GM12878 (cell line): ENCODE measurements at regions of chrX and their contacts with region 1.

Region 1: GRCh38 chrX:106481341-106481740 is 130.4 kb upstream of the RADX start:
- DNase-seq: peak; percentile 15
- ATAC-seq: peak; percentile 37
- H3K4me3 ChIP-seq: no peak overlapping the region
- H3K27ac ChIP-seq: no peak overlapping the region
- H3K4me1 ChIP-seq: no peaks in the 10 kb centered on the region
- H3K27me3 ChIP-seq: no peaks in the 10 kb centered on the region
- CTCF ChIP-seq: peak; percentile 65 to 79 (median 68)
- EP300 ChIP-seq: no peak
- POLR2A ChIP-seq: no peak
- RAD21 ChIP-seq: peak; percentile 84

Region 2: GRCh38 chrX:106611679-106612392 is 130.5 kb after region 1 on chrX and contains the start of gene RADX:
- CTCF ChIA-PET with region 1: interaction called, 14 read pairs
- POLR2A ChIA-PET with region 1: interaction called, 4 read pairs
- RAD21 ChIA-PET with region 1: interaction called, 4 read pairs
- SMC1A ChIA-PET with region 1: interaction called, 7 read pairs
- in situ Hi-C with region 1: no loop called
- intact Hi-C with region 1: no loop called
- DNase-seq: peak; percentile 49
- ATAC-seq: peak; percentile 98
- H3K4me3 ChIP-seq: peak within 1 kb of the TSS; percentile 73
- H3K27ac ChIP-seq: peak within 1 kb of the TSS; percentile 46
- H3K4me1 ChIP-seq: no peaks in the 10 kb centered on the region
- H3K27me3 ChIP-seq: no peaks in the 10 kb centered on the region
- CTCF ChIP-seq: no peak
- EP300 ChIP-seq: no peak
- POLR2A ChIP-seq: peak; percentile 62
- RAD21 ChIP-seq: no peak
- polyA plus RNA-seq, gene RADX: 4.3 to 5.4 TPM

Region 3: DNA sequence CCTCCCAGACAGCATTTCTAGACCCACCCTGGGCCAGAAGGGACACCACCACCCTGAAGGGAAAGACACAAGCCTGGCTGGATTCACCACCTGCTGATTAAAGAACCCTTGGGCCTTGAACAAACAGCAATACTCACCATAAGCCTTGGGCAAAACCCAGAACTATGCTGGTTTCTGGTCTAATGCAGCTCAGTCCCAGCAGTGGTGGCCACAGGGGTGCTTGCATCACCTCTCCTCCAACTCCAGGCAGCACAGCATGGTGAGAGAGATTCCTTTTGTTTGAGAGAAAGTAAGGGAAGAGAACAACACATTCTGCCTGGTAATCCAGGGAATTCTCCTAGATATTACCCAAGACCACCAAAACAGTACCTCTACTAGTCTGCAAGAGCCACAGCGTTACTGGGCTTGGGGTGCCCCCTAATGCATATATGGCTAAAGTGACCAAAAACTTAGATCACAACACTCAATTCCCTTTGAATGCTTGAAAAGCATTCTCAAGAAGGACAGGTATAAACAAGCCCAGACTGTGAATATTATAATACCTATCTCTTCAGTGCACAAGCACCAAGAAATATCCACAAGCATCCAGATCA is 270.8 kb after region 1 on chrX:
- CTCF ChIA-PET with region 1: interaction called, 4 read pairs
- POLR2A ChIA-PET with region 1: no interaction called
- RAD21 ChIA-PET with region 1: no interaction called
- SMC1A ChIA-PET with region 1: interaction called, 3 read pairs
- in situ Hi-C with region 1: no loop called
- intact Hi-C with region 1: loop called (anchors 5 kb)
- DNase-seq: no peak
- ATAC-seq: no peak
- H3K4me3 ChIP-seq: no peak overlapping the region
- H3K27ac ChIP-seq: no peak overlapping the region
- H3K4me1 ChIP-seq: no peaks in the 10 kb centered on the region
- H3K27me3 ChIP-seq: no peaks in the 10 kb centered on the region
- CTCF ChIP-seq: 0 out of 6 replicates have a peak, but pooled peaks of 1 of the 3 experiments have one; percentile 3
- EP300 ChIP-seq: no peak
- POLR2A ChIP-seq: no peak
- RAD21 ChIP-seq: peak; percentile 40; the same call in 1 of the 2 replicates

Region 4: DNA sequence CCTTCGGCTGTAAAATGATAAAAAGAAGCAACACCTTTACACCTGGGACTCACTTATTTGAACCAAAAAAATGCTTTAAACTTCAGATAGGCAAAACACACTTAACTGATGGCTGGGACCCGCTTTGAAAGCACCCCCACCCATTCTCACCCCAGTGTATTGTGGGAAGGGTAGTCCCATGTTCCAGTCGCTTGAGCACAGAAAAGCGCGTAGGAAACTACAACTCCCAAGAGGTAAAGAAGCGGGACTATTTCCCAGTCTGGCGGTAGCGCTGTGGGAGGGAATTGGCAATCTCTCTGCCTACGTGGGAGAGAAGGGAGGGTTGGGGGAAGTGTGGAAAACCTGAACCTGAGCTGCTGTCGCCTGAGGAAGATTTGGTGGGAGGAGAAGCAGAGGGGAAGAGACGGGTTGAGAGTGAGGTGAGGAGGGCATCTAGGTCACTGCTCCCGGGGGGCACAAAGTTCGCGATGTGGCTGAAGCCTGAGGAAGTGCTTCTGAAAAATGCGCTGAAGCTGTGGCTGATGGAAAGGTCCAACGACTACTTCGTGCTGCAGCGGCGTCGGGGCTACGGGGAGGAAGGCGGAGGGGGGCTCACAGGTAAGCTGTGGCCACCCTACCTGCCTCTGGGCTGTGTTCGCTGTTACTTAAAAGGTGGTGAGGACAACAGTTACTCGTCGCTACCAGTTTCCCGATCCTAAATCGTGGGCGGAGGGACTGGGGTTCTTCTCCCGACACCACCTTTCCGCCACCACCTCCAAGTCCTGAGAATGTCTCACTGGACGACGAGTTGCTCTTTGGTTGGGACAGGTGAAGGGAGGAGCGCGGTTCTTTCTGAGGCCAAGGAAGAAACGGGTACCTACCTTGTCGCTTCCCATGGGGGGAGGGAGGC is 321.3 kb after region 1 on chrX and contains the start of gene TBC1D8B:
- CTCF ChIA-PET with region 1: interaction called, 3 read pairs
- POLR2A ChIA-PET with region 1: no interaction called
- RAD21 ChIA-PET with region 1: no interaction called
- SMC1A ChIA-PET with region 1: interaction called, 3 read pairs
- in situ Hi-C with region 1: loop called (anchors 10 kb)
- intact Hi-C with region 1: no loop called
- DNase-seq: peak; percentile 50
- ATAC-seq: peak; percentile 97
- H3K4me3 ChIP-seq: peak within 1 kb of the TSS; percentile 46
- H3K27ac ChIP-seq: no peak within 1 kb of the TSS
- H3K4me1 ChIP-seq: no peaks in the 10 kb centered on the region
- H3K27me3 ChIP-seq: no peaks in the 10 kb centered on the region
- CTCF ChIP-seq: no peak
- EP300 ChIP-seq: no peak
- POLR2A ChIP-seq: no peak
- RAD21 ChIP-seq: no peak
- polyA plus RNA-seq, gene TBC1D8B: 0.95 to 1.2 TPM

Region 5: GRCh38 chrX:107894038-107894437 is 1412.7 kb after region 1 on chrX:
- CTCF ChIA-PET with region 1: no interaction called
- POLR2A ChIA-PET with region 1: no interaction called
- RAD21 ChIA-PET with region 1: no interaction called
- SMC1A ChIA-PET with region 1: no interaction called
- in situ Hi-C with region 1: loop called (anchors 25 kb)
- intact Hi-C with region 1: loop called (anchors 5 kb)
- DNase-seq: peak; percentile 20
- ATAC-seq: peak; percentile 87
- H3K4me3 ChIP-seq: no peak overlapping the region
- H3K27ac ChIP-seq: no peak overlapping the region
- H3K4me1 ChIP-seq: no peaks in the 10 kb centered on the region
- H3K27me3 ChIP-seq: no peaks in the 10 kb centered on the region
- CTCF ChIP-seq: peak; percentile 47 to 63 (median 54)
- EP300 ChIP-seq: no peak
- POLR2A ChIP-seq: no peak
- RAD21 ChIP-seq: peak; percentile 68